ENCODE measurements at regions of chr4 and their contacts with region 1.

Region 1: GRCh38 chr4:81471588-81472288 is at the start of gene RASGEF1B:
- DNase-seq: peak; percentile 84 to 98 (median 92)
- ATAC-seq: peak; percentile 84
- H3K4me3 ChIP-seq: peak within 1 kb of the TSS; percentile 85
- H3K4me3 Mint-ChIP-seq: peak within 1 kb of the TSS; percentile 94
- H3K27ac ChIP-seq: peak within 1 kb of the TSS; percentile 96
- H3K27ac Mint-ChIP-seq: peak within 1 kb of the TSS; percentile 91
- H3K4me1 ChIP-seq: peaks cover 31% of the 10 kb centered on the region
- H3K4me1 Mint-ChIP-seq: peaks cover 41% of the 10 kb centered on the region
- H3K27me3 ChIP-seq: no peaks in the 10 kb centered on the region
- H3K27me3 Mint-ChIP-seq: no peaks in the 10 kb centered on the region
- CTCF ChIP-seq: no peak
- total RNA-seq, gene RASGEF1B: 69.4 to 73.1 TPM

Region 2: GRCh38 chr4:81405894-81406401 is 65.8 kb before region 1 on chr4:
- CTCF ChIA-PET with region 1: no interaction called
- POLR2A ChIA-PET with region 1: no interaction called
- intact Hi-C with region 1: loop called in 1 of 2 experiments (anchors 5 kb)
- DNase-seq: peak in 8 of 14 experiments; percentile 6 to 85 (median 34)
- ATAC-seq: peak; percentile 89
- H3K4me3 ChIP-seq: peak overlapping the region; percentile 1
- H3K4me3 Mint-ChIP-seq: no peak overlapping the region
- H3K27ac ChIP-seq: no peak overlapping the region
- H3K27ac Mint-ChIP-seq: no peak overlapping the region
- H3K4me1 ChIP-seq: no peaks in the 10 kb centered on the region
- H3K4me1 Mint-ChIP-seq: peaks cover 4% of the 10 kb centered on the region
- H3K27me3 ChIP-seq: no peaks in the 10 kb centered on the region
- H3K27me3 Mint-ChIP-seq: no peaks in the 10 kb centered on the region
- CTCF ChIP-seq: peak; percentile 99

Region 3: DNA sequence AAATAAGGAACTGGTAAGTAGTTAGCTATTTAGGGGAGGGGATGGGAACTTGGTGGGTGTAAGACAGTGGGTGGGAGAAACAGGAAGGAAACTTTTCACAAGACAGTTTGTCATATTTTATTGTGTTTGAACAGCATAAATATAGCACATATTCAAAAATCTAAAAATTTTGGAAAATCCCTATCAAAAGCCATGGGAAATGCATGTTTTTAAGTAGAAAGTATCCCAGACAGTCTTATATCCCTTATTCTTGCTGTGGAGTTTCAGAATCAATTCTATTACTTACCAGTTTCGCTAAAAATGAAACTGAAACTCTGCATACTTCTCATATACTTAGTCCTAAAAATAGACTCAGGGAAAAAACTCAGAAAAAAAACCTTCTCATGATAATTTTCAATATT is 22.3 kb after region 1 on chr4:
- CTCF ChIA-PET with region 1: interaction called, 34 read pairs
- POLR2A ChIA-PET with region 1: interaction called, 49 read pairs
- intact Hi-C with region 1: loop called (anchors 1 to 2 kb)
- DNase-seq: peak in 3 of 14 experiments; percentile 57 to 73 (median 59)
- ATAC-seq: no peak
- H3K4me3 ChIP-seq: peak overlapping the region; percentile 36
- H3K4me3 Mint-ChIP-seq: peak overlapping the region; percentile 75
- H3K27ac ChIP-seq: peak overlapping the region; percentile 44 to 52
- H3K27ac Mint-ChIP-seq: peak overlapping the region; percentile 79
- H3K4me1 ChIP-seq: peaks cover 13% of the 10 kb centered on the region
- H3K4me1 Mint-ChIP-seq: peaks cover 50% of the 10 kb centered on the region
- H3K27me3 ChIP-seq: no peaks in the 10 kb centered on the region
- H3K27me3 Mint-ChIP-seq: no peaks in the 10 kb centered on the region
- CTCF ChIP-seq: no peak

Region 4: GRCh38 chr4:81562093-81562492 is 90.4 kb after region 1 on chr4:
- CTCF ChIA-PET with region 1: interaction called, 5 read pairs
- POLR2A ChIA-PET with region 1: interaction called, 10 read pairs
- intact Hi-C with region 1: no loop called
- DNase-seq: peak in 3 of 14 experiments; percentile 65 to 72 (median 70)
- ATAC-seq: peak; percentile 76
- H3K4me3 ChIP-seq: no peak overlapping the region
- H3K4me3 Mint-ChIP-seq: peak overlapping the region; percentile 16
- H3K27ac ChIP-seq: peak overlapping the region in 1 of 2 donors; percentile 23
- H3K27ac Mint-ChIP-seq: peak overlapping the region; percentile 78
- H3K4me1 ChIP-seq: peaks cover 3% of the 10 kb centered on the region
- H3K4me1 Mint-ChIP-seq: peaks cover 12% of the 10 kb centered on the region
- H3K27me3 ChIP-seq: no peaks in the 10 kb centered on the region
- H3K27me3 Mint-ChIP-seq: no peaks in the 10 kb centered on the region
- CTCF ChIP-seq: no peak

Region 5: GRCh38 chr4:81688085-81688484 is 216.3 kb after region 1 on chr4:
- CTCF ChIA-PET with region 1: interaction called, 11 read pairs
- POLR2A ChIA-PET with region 1: interaction called, 6 read pairs
- intact Hi-C with region 1: loop called (anchors 1 to 5 kb)
- DNase-seq: peak in 4 of 14 experiments; percentile 10 to 33 (median 30)
- ATAC-seq: no peak
- H3K4me3 ChIP-seq: no peak overlapping the region
- H3K4me3 Mint-ChIP-seq: no peak overlapping the region
- H3K27ac ChIP-seq: no peak overlapping the region
- H3K27ac Mint-ChIP-seq: no peak overlapping the region
- H3K4me1 ChIP-seq: no peaks in the 10 kb centered on the region
- H3K4me1 Mint-ChIP-seq: no peaks in the 10 kb centered on the region
- H3K27me3 ChIP-seq: no peaks in the 10 kb centered on the region
- H3K27me3 Mint-ChIP-seq: no peaks in the 10 kb centered on the region
- CTCF ChIP-seq: no peak

Region 6: GRCh38 chr4:82140440-82140839 is 668.7 kb after region 1 on chr4:
- CTCF ChIA-PET with region 1: no interaction called
- POLR2A ChIA-PET with region 1: no interaction called
- intact Hi-C with region 1: no loop called
- DNase-seq: no peak
- ATAC-seq: no peak
- H3K4me3 ChIP-seq: no peak overlapping the region
- H3K4me3 Mint-ChIP-seq: no peak overlapping the region
- H3K27ac ChIP-seq: no peak overlapping the region
- H3K27ac Mint-ChIP-seq: no peak overlapping the region
- H3K4me1 ChIP-seq: peaks cover 9% of the 10 kb centered on the region
- H3K4me1 Mint-ChIP-seq: peaks cover 30% of the 10 kb centered on the region
- H3K27me3 ChIP-seq: no peaks in the 10 kb centered on the region
- H3K27me3 Mint-ChIP-seq: no peaks in the 10 kb centered on the region
- CTCF ChIP-seq: no peak

Region 7: DNA sequence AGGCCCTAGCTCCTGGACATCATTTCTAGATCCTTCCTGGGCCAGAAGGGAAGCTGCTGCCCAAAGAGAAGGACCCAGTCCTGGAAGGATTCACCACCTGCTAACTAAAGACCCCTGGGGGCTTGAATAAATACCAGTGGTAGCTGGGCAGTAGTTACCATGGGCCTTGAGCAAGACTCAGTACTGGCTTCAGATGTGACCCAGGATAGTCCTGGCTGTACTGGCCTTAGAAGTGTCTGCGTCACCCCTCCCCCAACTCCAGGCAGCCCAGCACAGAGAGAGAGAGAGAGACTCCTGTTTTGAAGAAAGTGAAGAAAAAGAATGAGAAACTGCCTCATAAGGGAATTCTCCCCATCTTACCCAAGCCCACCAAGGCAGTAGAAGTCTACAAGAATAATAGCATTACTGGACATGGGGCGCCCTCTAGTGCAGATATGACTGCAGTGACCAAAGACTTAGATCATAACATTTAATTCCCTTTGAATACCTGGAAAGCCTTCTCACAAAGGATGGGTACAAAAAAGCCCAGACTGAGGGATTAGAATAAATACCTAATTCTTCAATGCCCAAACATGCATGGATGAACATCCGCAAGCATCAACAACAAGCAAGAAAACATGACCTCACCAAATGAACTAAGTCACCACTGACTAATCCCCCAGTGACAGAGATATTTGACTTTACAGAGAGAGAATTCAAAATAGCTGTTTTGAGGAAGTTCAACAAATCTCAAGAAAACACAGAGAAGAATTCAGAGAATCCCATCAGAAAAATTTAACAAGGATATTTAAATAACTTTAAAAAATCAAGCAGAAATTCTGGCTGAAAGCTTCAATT is 730.3 kb after region 1 on chr4:
- CTCF ChIA-PET with region 1: no interaction called
- POLR2A ChIA-PET with region 1: no interaction called
- intact Hi-C with region 1: loop called (anchors 1 to 5 kb)
- DNase-seq: peak in 13 of 14 experiments; percentile 5 to 72 (median 34)
- ATAC-seq: peak; percentile 65
- H3K4me3 ChIP-seq: no peak overlapping the region
- H3K4me3 Mint-ChIP-seq: no peak overlapping the region
- H3K27ac ChIP-seq: no peak overlapping the region
- H3K27ac Mint-ChIP-seq: no peak overlapping the region
- H3K4me1 ChIP-seq: peaks cover 5% of the 10 kb centered on the region
- H3K4me1 Mint-ChIP-seq: peaks cover 10% of the 10 kb centered on the region
- H3K27me3 ChIP-seq: no peaks in the 10 kb centered on the region
- H3K27me3 Mint-ChIP-seq: peaks cover 8% of the 10 kb centered on the region
- CTCF ChIP-seq: peak; percentile 62

Region 8: GRCh38 chr4:82284858-82285805 is 813.4 kb after region 1 on chr4:
- CTCF ChIA-PET with region 1: no interaction called
- POLR2A ChIA-PET with region 1: interaction called, 5 read pairs
- intact Hi-C with region 1: loop called in 1 of 2 experiments (anchors 5 kb)
- DNase-seq: peak; percentile 98 to 100 (median 99)
- ATAC-seq: peak; percentile 88
- H3K4me3 ChIP-seq: peak overlapping the region; percentile 57
- H3K4me3 Mint-ChIP-seq: peak overlapping the region; percentile 85
- H3K27ac ChIP-seq: peak overlapping the region in 1 of 2 donors; percentile 69
- H3K27ac Mint-ChIP-seq: peak overlapping the region; percentile 80
- H3K4me1 ChIP-seq: peaks cover 12% of the 10 kb centered on the region
- H3K4me1 Mint-ChIP-seq: peaks cover 19% of the 10 kb centered on the region
- H3K27me3 ChIP-seq: no peaks in the 10 kb centered on the region
- H3K27me3 Mint-ChIP-seq: no peaks in the 10 kb centered on the region
- CTCF ChIP-seq: peak; percentile 96

Measured in CD4-positive, alpha-beta T cell (primary cell).